Cardiac septum (tissue), 1 donor: ENCODE measurements at regions of chr15 and their contacts with region 1.

Region 1: GRCh38 chr15:71329497-71330260 is 214.4 kb downstream of the THSD4 start:
- DNase-seq: no peak

Region 2: DNA sequence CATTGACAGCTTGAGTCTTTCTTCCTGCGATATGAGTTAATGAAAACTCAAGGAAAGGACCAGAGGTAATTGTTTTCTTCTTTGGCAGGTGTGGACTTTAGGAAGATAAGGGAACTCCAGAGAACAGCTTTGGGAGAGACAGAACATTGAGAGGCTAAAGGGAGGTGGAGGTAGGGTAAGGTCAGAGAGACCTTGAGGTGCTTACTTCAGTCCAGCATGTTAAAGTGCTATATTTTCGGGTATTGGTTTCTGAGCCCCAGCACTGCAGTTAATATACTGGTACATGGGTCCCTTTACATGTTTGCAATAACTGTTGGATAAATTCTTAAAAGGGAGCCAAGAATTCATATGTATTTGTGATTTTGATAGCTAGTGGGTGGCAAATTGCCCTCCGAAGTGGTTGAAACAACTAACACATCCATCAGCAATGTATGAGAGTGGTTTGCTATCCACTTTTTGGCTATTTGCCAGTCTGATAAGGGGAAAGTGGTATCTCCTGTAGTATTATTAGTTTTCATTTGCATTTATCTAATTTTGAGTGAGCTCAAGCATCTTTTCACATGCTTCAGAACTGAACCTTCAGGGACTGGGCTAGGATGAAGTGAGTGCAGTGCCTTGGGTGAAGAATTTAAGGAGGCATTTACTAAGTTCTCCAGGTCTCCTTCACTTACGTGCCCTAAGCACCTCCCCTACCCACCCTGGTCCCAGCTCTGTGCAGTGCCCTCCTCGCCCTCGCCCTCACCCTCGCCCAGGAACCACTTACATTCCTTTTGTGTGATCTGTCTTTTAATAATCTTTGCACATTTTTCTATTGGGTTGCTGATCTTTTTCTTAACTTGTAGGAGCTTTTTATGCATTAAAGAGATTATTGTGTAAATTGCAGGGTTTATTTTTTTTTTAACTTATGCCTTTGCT is 108.0 kb after region 1 on chr15:
- intact Hi-C with region 1: loop called (anchors 10 kb)
- DNase-seq: no peak